ENCODE measurements at regions of chr14 and their contacts with region 1.

Region 1: GRCh38 chr14:22556990-22557623 is 31.9 kb downstream of the DAD1 start:
- DNase-seq: peak; percentile 79 to 98 (median 93)
- ATAC-seq: peak; percentile 17
- H3K4me3 ChIP-seq: peak overlapping the region; percentile 46 to 60
- H3K4me3 Mint-ChIP-seq: peak overlapping the region; percentile 81
- H3K27ac ChIP-seq: peak overlapping the region; percentile 86 to 97
- H3K27ac Mint-ChIP-seq: peak overlapping the region; percentile 98
- H3K4me1 ChIP-seq: peaks cover 86% of the 10 kb centered on the region
- H3K4me1 Mint-ChIP-seq: peaks cover 91% of the 10 kb centered on the region
- H3K27me3 ChIP-seq: no peaks in the 10 kb centered on the region
- H3K27me3 Mint-ChIP-seq: no peaks in the 10 kb centered on the region
- CTCF ChIP-seq: peak; percentile 100

Region 2: DNA sequence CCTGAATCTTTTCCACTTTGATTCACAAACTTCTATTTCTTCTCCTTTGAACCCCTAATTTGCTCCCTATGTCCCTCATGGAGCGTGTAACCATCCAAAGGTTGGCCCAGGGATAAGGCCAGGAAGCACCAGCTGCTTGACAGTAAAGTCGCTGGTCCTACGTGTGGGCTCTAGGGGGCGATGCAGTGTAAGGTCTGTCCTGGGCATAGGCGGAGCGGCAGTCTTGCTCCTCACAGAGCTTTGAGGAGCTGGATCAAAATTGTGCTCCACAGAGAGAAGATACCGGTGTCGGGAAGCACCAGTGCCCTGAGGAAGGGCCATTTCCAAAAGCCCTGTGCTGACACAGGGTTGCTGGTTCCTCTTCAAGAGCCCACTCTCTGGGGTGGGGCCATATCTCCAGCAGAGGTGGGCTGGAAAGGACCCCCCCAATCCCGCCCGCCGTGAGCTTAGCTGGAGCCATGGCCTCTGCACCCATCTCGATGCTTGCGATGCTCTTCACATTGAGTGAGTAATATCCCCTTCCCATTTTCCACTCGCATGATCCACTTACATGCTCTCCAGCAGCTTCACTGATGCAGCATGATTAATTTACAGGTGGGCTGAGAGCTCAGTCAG is 833.6 kb before region 1 on chr14:
- CTCF ChIA-PET with region 1: interaction called, 3 read pairs
- POLR2A ChIA-PET with region 1: no interaction called
- intact Hi-C with region 1: loop called (anchors 5 kb)
- DNase-seq: peak in 6 of 9 experiments; percentile 9 to 75 (median 50)
- ATAC-seq: peak; percentile 80
- H3K4me3 ChIP-seq: peak overlapping the region; percentile 24 to 42
- H3K4me3 Mint-ChIP-seq: peak overlapping the region; percentile 80
- H3K27ac ChIP-seq: peak overlapping the region in 1 of 2 experiments; percentile 8
- H3K27ac Mint-ChIP-seq: peak overlapping the region; percentile 76
- H3K4me1 ChIP-seq: no peaks in the 10 kb centered on the region
- H3K4me1 Mint-ChIP-seq: peaks cover 3% of the 10 kb centered on the region
- H3K27me3 ChIP-seq: peaks cover 0 to 2% of the 10 kb centered on the region in 2 experiments
- H3K27me3 Mint-ChIP-seq: peaks cover 37% of the 10 kb centered on the region
- CTCF ChIP-seq: peak; percentile 35

Region 3: DNA sequence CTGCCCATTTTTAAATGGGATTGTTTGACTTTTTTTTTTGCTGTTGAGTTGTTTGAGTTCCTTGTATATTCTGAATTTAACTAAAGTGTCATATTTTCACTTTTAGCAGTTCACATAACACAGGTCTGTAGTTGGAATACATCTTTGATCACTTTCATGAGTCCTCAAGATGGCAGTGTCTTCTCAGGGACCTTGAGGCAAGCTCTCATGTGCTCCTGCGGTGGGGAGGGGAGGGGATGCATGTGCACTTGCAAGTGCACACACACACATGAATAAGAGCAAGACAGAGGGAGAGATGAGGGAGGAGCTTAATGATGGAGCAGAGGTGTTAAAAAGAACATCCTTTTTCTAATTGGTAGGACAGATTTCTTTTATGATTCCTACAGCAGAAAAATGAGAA is 592.1 kb before region 1 on chr14:
- CTCF ChIA-PET with region 1: no interaction called
- POLR2A ChIA-PET with region 1: no interaction called
- intact Hi-C with region 1: loop called in 1 of 2 experiments (anchors 1 kb)
- DNase-seq: peak in 6 of 9 experiments; percentile 30 to 74 (median 58)
- ATAC-seq: peak; percentile 91
- H3K4me3 ChIP-seq: no peak overlapping the region
- H3K4me3 Mint-ChIP-seq: peak overlapping the region; percentile 4
- H3K27ac ChIP-seq: no peak overlapping the region
- H3K27ac Mint-ChIP-seq: peak overlapping the region; percentile 66
- H3K4me1 ChIP-seq: no peaks in the 10 kb centered on the region
- H3K4me1 Mint-ChIP-seq: peaks cover 25% of the 10 kb centered on the region
- H3K27me3 ChIP-seq: no peaks in the 10 kb centered on the region
- H3K27me3 Mint-ChIP-seq: peaks cover 2% of the 10 kb centered on the region
- CTCF ChIP-seq: no peak

Region 4: GRCh38 chr14:22112004-22112403 is 445.1 kb before region 1 on chr14:
- CTCF ChIA-PET with region 1: no interaction called
- POLR2A ChIA-PET with region 1: interaction called, 3 read pairs
- intact Hi-C with region 1: loop called in 1 of 2 experiments (anchors 5 kb)
- DNase-seq: peak in 8 of 9 experiments; percentile 8 to 61 (median 50)
- ATAC-seq: peak; percentile 36
- H3K4me3 ChIP-seq: peak overlapping the region; percentile 31 to 37
- H3K4me3 Mint-ChIP-seq: peak overlapping the region; percentile 80
- H3K27ac ChIP-seq: no peak overlapping the region
- H3K27ac Mint-ChIP-seq: peak overlapping the region; percentile 88
- H3K4me1 ChIP-seq: no peaks in the 10 kb centered on the region
- H3K4me1 Mint-ChIP-seq: peaks cover 28% of the 10 kb centered on the region
- H3K27me3 ChIP-seq: peaks cover 0 to 2% of the 10 kb centered on the region in 2 experiments
- H3K27me3 Mint-ChIP-seq: no peaks in the 10 kb centered on the region
- CTCF ChIP-seq: peak; percentile 34

Region 5: DNA sequence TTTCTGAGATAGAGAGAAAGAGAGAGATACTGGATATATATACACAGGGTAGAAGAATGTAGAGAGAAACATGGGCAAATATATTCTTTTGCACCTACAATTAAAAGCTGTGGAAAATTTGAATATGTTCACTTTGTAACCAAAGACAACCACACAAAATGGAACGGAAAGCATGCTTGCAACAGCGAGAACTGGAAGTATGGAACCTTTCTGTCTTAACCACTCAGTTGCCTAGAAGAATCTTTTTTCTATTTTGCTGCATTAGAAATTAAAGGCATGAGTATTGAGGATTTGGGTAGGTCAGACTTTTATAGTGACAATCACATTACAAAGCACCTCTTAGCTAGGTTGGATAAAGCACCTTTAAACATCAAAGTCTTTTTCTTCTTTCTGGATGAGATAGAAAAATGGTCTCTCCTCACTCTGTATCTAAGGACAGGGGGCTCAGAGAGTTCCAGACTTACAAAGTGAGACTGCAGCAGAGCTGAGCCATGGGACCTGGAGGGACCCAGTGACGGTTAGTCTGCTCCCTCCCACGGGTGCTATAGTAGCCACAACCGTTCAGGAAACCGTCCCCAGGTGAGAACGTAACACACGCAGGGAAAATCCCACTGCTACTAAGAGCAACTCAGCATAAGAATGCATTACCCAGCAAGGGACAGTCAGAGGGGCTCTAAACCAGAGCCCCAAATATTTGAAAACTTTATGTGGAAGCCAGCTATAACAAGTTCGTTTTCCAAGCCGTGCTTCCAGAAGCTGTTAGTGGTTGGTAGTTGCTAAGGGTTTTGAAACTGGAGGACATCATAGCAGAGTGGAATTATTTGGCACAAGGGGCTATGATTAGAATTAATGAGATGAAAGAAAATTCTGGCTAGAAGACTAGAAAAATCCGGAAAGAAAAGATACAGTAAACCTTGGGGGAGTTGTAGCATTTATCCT is 65.2 kb before region 1 on chr14:
- CTCF ChIA-PET with region 1: interaction called, 4 read pairs
- POLR2A ChIA-PET with region 1: interaction called, 472 read pairs
- intact Hi-C with region 1: no loop called
- DNase-seq: peak in 4 of 9 experiments; percentile 43 to 83 (median 56)
- ATAC-seq: peak; percentile 43
- H3K4me3 ChIP-seq: peak overlapping the region; percentile 33 to 53
- H3K4me3 Mint-ChIP-seq: peak overlapping the region; percentile 84
- H3K27ac ChIP-seq: peak overlapping the region; percentile 32 to 77
- H3K27ac Mint-ChIP-seq: peak overlapping the region; percentile 99
- H3K4me1 ChIP-seq: no peaks in the 10 kb centered on the region
- H3K4me1 Mint-ChIP-seq: peaks cover 34% of the 10 kb centered on the region
- H3K27me3 ChIP-seq: no peaks in the 10 kb centered on the region
- H3K27me3 Mint-ChIP-seq: no peaks in the 10 kb centered on the region
- CTCF ChIP-seq: no peak

Region 6: GRCh38 chr14:22536853-22537338 is 20.2 kb before region 1 on chr14:
- CTCF ChIA-PET with region 1: interaction called, 225 read pairs
- POLR2A ChIA-PET with region 1: interaction called, 348 read pairs
- intact Hi-C with region 1: loop called in 1 of 2 experiments (anchors 1 kb)
- DNase-seq: peak in 8 of 9 experiments; percentile 65 to 93 (median 82)
- ATAC-seq: peak; percentile 86
- H3K4me3 ChIP-seq: peak overlapping the region; percentile 38
- H3K4me3 Mint-ChIP-seq: peak overlapping the region; percentile 76
- H3K27ac ChIP-seq: peak overlapping the region; percentile 50 to 83
- H3K27ac Mint-ChIP-seq: peak overlapping the region; percentile 93
- H3K4me1 ChIP-seq: peaks cover 98% of the 10 kb centered on the region
- H3K4me1 Mint-ChIP-seq: peaks cover 96% of the 10 kb centered on the region
- H3K27me3 ChIP-seq: no peaks in the 10 kb centered on the region
- H3K27me3 Mint-ChIP-seq: no peaks in the 10 kb centered on the region
- CTCF ChIP-seq: no peak

Region 7: GRCh38 chr14:22822571-22823098 is 265.5 kb after region 1 on chr14:
- CTCF ChIA-PET with region 1: interaction called, 10 read pairs
- POLR2A ChIA-PET with region 1: interaction called, 3 read pairs
- intact Hi-C with region 1: no loop called
- DNase-seq: peak; percentile 41 to 85 (median 76)
- ATAC-seq: peak; percentile 89
- H3K4me3 ChIP-seq: peak overlapping the region; percentile 26 to 35
- H3K4me3 Mint-ChIP-seq: peak overlapping the region; percentile 61
- H3K27ac ChIP-seq: no peak overlapping the region
- H3K27ac Mint-ChIP-seq: no peak overlapping the region
- H3K4me1 ChIP-seq: peaks cover 10% of the 10 kb centered on the region
- H3K4me1 Mint-ChIP-seq: peaks cover 16% of the 10 kb centered on the region
- H3K27me3 ChIP-seq: peaks cover 4 to 21% of the 10 kb centered on the region in 2 experiments
- H3K27me3 Mint-ChIP-seq: peaks cover 23% of the 10 kb centered on the region
- CTCF ChIP-seq: peak; percentile 81

Region 8: GRCh38 chr14:22945642-22946041 is 388.5 kb after region 1 on chr14:
- CTCF ChIA-PET with region 1: no interaction called
- POLR2A ChIA-PET with region 1: no interaction called
- intact Hi-C with region 1: no loop called
- DNase-seq: no peak
- ATAC-seq: no peak
- H3K4me3 ChIP-seq: no peak overlapping the region
- H3K4me3 Mint-ChIP-seq: no peak overlapping the region
- H3K27ac ChIP-seq: no peak overlapping the region
- H3K27ac Mint-ChIP-seq: no peak overlapping the region
- H3K4me1 ChIP-seq: no peaks in the 10 kb centered on the region
- H3K4me1 Mint-ChIP-seq: peaks cover 2% of the 10 kb centered on the region
- H3K27me3 ChIP-seq: no peaks in the 10 kb centered on the region
- H3K27me3 Mint-ChIP-seq: no peaks in the 10 kb centered on the region
- CTCF ChIP-seq: no peak